Activated B cell treated with CpG ODN at 0.5 μM for 24 hours (primary cell): ENCODE measurements at regions of chr19 and their contacts with region 1.

Region 1: GRCh38 chr19:51926784-51927742 is at the start of gene ZNF613:
- DNase-seq: peak; percentile 71
- ATAC-seq: peak; percentile 94
- H3K4me3 Mint-ChIP-seq: peak within 1 kb of the TSS; percentile 100
- H3K27ac Mint-ChIP-seq: peak within 1 kb of the TSS; percentile 93
- H3K4me1 Mint-ChIP-seq: peaks cover 24% of the 10 kb centered on the region
- H3K27me3 Mint-ChIP-seq: no peaks in the 10 kb centered on the region
- CTCF ChIP-seq: no peak
- total RNA-seq, gene ZNF613: 7.7 and 7.8 TPM in 2 replicates

Region 2: GRCh38 chr19:51339687-51340656 is 587.1 kb before region 1 on chr19:
- CTCF ChIA-PET with region 1: no interaction called
- POLR2A ChIA-PET with region 1: no interaction called
- intact Hi-C with region 1: no loop called
- DNase-seq: peak; percentile 89
- ATAC-seq: peak; percentile 84
- H3K4me3 Mint-ChIP-seq: peak overlapping the region; percentile 91
- H3K27ac Mint-ChIP-seq: peak overlapping the region; percentile 75
- H3K4me1 Mint-ChIP-seq: peaks cover 48% of the 10 kb centered on the region
- H3K27me3 Mint-ChIP-seq: no peaks in the 10 kb centered on the region
- CTCF ChIP-seq: no peak

Region 3: GRCh38 chr19:51904331-51905165 is 22.5 kb before region 1 on chr19 and contains the start of gene ZNF649:
- CTCF ChIA-PET with region 1: no interaction called
- POLR2A ChIA-PET with region 1: no interaction called
- intact Hi-C with region 1: loop called (anchors 1 kb)
- DNase-seq: peak; percentile 68
- ATAC-seq: peak; percentile 95
- H3K4me3 Mint-ChIP-seq: peak within 1 kb of the TSS; percentile 99
- H3K27ac Mint-ChIP-seq: peak within 1 kb of the TSS; percentile 98
- H3K4me1 Mint-ChIP-seq: peaks cover 24% of the 10 kb centered on the region
- H3K27me3 Mint-ChIP-seq: peaks cover 15% of the 10 kb centered on the region
- CTCF ChIP-seq: no peak
- total RNA-seq, gene ZNF649: 21.9 and 27.4 TPM in 2 replicates

Region 4: DNA sequence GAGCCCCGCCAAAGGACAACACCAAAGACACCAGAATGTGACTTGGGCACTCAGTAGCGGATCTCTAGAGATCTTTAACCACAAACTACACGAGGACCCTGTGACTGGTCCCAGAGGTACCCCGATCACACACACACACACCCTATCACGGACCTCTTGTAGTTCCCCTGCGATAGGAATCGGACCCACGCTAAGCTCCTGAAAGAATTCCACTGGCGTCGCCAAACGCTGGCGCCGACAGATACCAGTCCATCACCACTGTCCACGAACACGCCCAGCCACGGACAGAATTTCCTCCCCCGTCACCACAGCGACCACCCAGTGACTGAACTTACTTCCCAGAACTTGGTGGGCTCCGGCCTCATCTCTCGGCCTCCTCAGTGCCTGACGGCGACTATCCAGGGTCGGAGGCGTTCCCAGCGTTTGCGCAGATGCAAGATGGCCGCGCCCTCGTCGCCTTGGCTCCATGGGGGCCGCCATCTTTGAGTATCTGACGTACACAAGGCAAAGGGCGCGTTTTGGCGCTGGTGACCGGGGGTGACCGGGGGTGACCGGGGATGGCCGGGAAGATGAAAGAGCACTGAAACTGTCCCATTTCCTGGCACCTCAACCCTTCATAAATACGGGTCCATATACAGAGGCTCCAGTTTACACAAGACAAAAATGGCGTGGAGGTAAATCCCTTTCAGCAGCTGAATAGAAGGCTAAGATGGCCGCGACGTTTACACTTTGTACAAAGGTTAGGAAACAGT is 80.9 kb after region 1 on chr19 and contains the start of gene ZNF615:
- CTCF ChIA-PET with region 1: no interaction called
- POLR2A ChIA-PET with region 1: no interaction called
- intact Hi-C with region 1: loop called (anchors 1 kb)
- DNase-seq: peak; percentile 85
- ATAC-seq: peak; percentile 94
- H3K4me3 Mint-ChIP-seq: peak within 1 kb of the TSS; percentile 93
- H3K27ac Mint-ChIP-seq: peak within 1 kb of the TSS; percentile 99
- H3K4me1 Mint-ChIP-seq: peaks cover 18% of the 10 kb centered on the region
- H3K27me3 Mint-ChIP-seq: no peaks in the 10 kb centered on the region
- CTCF ChIP-seq: no peak
- total RNA-seq, gene ZNF615: 9.1 and 13.5 TPM in 2 replicates

Region 5: DNA sequence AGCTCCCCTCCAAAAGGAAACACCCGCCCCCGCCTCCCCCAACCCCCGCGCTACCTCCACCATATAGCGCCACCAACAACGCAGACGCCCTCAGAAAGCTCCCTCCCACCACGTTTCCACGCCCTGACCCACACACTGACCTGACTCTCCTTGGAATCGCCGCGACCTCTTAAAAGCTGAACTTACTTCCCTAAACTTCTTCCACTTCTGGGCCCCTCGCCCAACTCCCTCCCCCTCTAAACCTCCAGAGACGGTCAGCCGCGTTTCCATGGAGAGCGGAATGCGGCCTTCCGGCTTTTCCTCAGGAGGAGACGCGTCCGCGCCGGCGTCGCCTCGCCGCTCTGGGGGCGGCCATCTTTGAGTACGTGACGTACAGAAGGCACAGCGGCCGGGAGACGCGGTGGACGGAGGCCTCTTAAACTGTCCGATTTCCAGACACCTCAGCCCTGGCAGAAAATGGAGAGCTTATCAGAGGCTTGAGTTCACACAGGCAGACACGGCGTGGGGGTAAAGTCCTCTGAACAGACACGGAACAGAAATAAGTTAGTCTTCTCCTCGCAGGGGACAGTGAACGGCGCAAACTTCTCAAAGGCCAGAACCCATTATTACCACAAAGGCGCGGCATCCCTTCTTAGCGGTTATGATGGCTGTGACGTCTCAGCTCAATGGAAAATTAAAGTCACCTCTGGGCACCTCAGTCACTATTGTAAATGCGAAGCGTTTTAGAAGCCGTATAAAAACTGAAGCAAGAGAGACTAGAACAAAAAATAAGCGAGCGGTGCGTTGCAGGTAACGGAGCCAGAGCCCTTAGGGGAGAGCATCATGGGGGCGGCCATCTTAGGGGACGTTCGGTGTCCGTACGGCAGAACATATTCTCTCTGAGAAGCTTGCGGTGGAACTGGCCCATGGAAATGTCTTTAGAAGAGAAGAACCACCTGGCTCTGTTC is 121.8 kb after region 1 on chr19 and contains the start of gene ZNF432:
- CTCF ChIA-PET with region 1: no interaction called
- POLR2A ChIA-PET with region 1: interaction called, 7 read pairs
- intact Hi-C with region 1: loop called (anchors 1 kb)
- DNase-seq: peak; percentile 82
- ATAC-seq: peak; percentile 88
- H3K4me3 Mint-ChIP-seq: peak within 1 kb of the TSS; percentile 100
- H3K27ac Mint-ChIP-seq: peak within 1 kb of the TSS; percentile 99
- H3K4me1 Mint-ChIP-seq: peaks cover 19% of the 10 kb centered on the region
- H3K27me3 Mint-ChIP-seq: no peaks in the 10 kb centered on the region
- CTCF ChIP-seq: no peak
- total RNA-seq, gene ZNF432: 18.1 and 18.4 TPM in 2 replicates

Region 6: GRCh38 chr19:52237771-52238400 is 310.8 kb after region 1 on chr19:
- CTCF ChIA-PET with region 1: no interaction called
- POLR2A ChIA-PET with region 1: no interaction called
- intact Hi-C with region 1: loop called (anchors 10 kb)
- DNase-seq: peak; percentile 28
- ATAC-seq: peak; percentile 81
- H3K4me3 Mint-ChIP-seq: no peak overlapping the region
- H3K27ac Mint-ChIP-seq: no peak overlapping the region
- H3K4me1 Mint-ChIP-seq: no peaks in the 10 kb centered on the region
- H3K27me3 Mint-ChIP-seq: no peaks in the 10 kb centered on the region
- CTCF ChIP-seq: peak; percentile 61